ENCODE measurements at regions of chr2 and their contacts with region 1.

Region 1: GRCh38 chr2:173402405-173402974 is 47.8 kb downstream of the CDCA7 start:
- DNase-seq: peak; percentile 85
- H3K4me3 ChIP-seq: no peak overlapping the region
- H3K27ac ChIP-seq: no peak overlapping the region
- H3K4me1 ChIP-seq: peaks cover 3 to 14% (median 8%) of the 10 kb centered on the region in 6 donors
- H3K27me3 ChIP-seq: peaks cover 0 to 82% (median 54%) of the 10 kb centered on the region in 7 donors
- CTCF ChIP-seq: peak; percentile 56 to 79 (median 73)
- POLR2A ChIP-seq: no peak

Region 2: DNA sequence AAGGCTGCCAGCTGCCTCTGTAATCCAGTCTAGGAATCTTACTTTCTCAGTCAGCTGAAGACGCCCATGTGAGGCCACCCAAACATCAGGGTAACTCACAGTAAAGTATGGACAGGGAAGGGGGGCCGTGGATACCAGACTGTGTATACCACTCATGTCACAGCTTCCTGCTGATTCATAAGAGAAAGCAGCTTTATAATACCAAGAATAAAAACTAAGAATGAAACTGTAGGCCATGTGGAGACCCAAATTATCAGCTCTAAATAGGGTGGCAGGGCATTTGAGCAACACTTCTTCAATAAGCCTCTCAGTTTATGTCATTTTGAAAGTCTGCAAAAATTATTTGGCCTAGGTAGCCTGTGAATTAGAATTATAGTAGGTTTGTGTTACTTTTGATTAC is 162.8 kb before region 1 on chr2:
- intact Hi-C with region 1: no loop called
- DNase-seq: no peak
- H3K4me3 ChIP-seq: no peak overlapping the region
- H3K27ac ChIP-seq: no peak overlapping the region
- H3K4me1 ChIP-seq: no peaks in the 10 kb centered on the region
- H3K27me3 ChIP-seq: no peaks in the 10 kb centered on the region
- CTCF ChIP-seq: no peak
- POLR2A ChIP-seq: no peak

Region 3: DNA sequence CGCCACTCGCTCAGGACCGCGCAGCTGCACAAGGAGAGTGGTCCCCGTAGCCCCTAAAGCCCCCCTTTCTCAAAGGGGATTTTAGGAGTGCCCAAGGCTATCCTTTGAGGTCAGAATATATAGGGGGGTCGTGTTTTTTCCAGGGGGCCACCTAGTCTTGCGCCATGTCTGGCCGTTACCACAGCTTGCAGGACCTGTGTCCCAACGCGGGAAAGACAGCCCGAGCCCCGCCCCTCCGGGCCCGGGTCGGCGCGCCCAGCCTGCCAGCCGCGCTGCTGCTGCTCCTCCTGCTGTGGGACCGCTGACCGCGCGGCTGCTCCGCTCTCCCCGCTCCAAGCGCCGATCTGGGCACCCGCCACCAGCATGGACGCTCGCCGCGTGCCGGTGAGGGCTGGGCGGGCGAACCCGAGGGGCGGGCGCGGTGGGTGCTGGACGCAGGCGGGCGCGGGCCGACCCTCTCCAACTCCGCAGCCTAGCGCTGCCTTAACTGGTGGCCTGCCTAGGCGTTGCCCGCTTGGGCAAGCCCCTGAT is 47.8 kb before region 1 on chr2 and contains the start of gene CDCA7:
- intact Hi-C with region 1: no loop called
- DNase-seq: peak; percentile 87
- H3K4me3 ChIP-seq: peak within 1 kb of the TSS; percentile 37 to 83 (median 68)
- H3K27ac ChIP-seq: peak within 1 kb of the TSS in 3 of 8 donors; percentile 10 to 46 (median 41)
- H3K4me1 ChIP-seq: peaks cover 8 to 29% (median 27%) of the 10 kb centered on the region in 6 donors
- H3K27me3 ChIP-seq: peaks cover 0 to 69% (median 38%) of the 10 kb centered on the region in 7 donors
- CTCF ChIP-seq: no peak
- POLR2A ChIP-seq: no peak
- total RNA-seq, gene CDCA7: 1.3 to 5.2 (median 3.1) TPM

Region 4: DNA sequence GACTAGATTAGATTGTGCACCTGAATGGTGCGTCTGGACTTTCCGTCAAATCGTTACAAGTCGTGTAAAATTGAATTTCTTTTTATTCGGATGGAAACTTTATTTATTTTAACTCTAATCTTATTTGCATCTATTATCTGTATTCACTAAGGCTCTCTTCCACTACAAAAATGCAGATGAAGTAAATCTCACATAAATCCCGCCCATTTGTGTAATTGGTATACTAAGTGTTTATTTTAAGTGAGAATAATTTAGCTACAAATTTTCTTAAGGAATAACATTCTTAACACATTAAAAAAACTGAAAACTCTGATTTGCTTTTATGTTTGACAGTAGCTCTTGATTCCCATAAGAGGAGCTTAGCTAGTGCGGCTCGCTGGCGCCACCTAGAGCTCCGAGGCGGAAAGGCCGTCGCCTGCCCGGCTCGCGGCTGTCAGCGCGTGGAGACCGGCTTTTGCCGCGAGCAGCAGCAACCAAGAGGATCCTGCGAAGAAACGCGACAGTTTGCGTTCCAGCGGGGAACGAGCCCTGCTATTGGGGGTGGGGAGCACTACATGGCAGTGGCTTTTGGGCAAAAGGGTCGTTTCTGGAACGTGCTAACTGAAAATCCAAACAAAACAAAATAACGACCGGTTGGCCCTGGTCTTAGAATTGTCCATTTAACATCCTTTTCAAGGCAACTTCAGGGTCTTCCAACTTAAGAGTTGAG is 939.0 kb after region 1 on chr2:
- intact Hi-C with region 1: loop called (anchors 5 kb)
- DNase-seq: peak; percentile 98
- H3K4me3 ChIP-seq: peak overlapping the region in 4 of 8 donors; percentile 3 to 54 (median 9)
- H3K27ac ChIP-seq: no peak overlapping the region
- H3K4me1 ChIP-seq: peaks cover 26 to 74% (median 64%) of the 10 kb centered on the region in 6 donors
- H3K27me3 ChIP-seq: peaks cover 6 to 97% (median 91%) of the 10 kb centered on the region in 7 donors
- CTCF ChIP-seq: peak; percentile 72 to 99 (median 97)
- POLR2A ChIP-seq: no peak

Measured in spleen (tissue), 13 donors.